ENCODE measurements at regions of chr22 and their contacts with region 1.

Region 1: GRCh38 chr22:37428649-37429586 is 1.6 kb upstream of the ELFN2 start:
- DNase-seq: peak; percentile 53 to 64
- ATAC-seq: peak; percentile 28 to 74; a peak in 3 of 6 replicates
- H3K4me3 ChIP-seq: no peak overlapping the region
- H3K27ac ChIP-seq: peak overlapping the region; percentile 64 to 97
- H3K4me1 ChIP-seq: peaks cover 64% of the 10 kb centered on the region
- CTCF ChIP-seq: peak; percentile 74
- EP300 ChIP-seq: no peak
- POLR2A ChIP-seq: no peak
- RAD21 ChIP-seq: peak; percentile 60 to 64

Region 2: DNA sequence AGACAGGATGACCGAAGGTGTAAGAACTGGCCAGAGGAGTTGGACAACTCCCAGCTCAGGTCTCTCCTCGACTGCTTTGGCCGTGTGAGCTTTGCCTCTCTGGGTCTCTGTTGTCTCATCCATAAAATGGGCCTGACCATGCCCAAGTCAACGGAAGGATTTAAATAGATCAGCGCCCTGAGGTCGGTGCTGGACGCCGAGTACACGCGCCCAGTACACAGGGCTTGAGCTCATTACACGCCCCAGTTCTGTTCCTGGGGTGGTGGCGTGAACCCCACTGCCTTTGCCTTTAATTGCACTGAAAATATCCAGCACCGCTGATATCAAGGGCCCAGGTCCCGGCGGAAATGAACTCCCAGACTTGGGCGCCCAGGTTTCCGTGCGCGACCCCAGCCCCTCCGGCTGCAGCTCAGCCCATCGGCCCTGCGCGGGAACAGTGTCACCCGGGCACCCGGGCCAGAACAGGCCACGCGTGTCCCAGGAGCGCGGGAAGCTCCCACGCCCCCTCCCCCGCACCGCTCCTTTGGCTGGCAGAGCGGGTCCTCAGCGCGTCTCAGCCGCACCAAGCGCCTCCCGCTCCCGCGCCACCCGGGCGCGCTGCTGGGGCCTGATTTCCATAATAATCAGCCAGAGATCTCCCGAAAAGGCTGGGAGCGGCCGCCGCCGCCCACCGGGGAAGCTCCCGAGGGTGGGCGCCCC is 104.4 kb before region 1 on chr22:
- CTCF ChIA-PET with region 1: interaction called, 130 read pairs
- POLR2A ChIA-PET with region 1: no interaction called
- DNase-seq: no peak
- ATAC-seq: no peak
- H3K4me3 ChIP-seq: no peak overlapping the region
- H3K27ac ChIP-seq: peak overlapping the region; percentile 61 to 94
- H3K4me1 ChIP-seq: peaks cover 71% of the 10 kb centered on the region
- CTCF ChIP-seq: no peak
- EP300 ChIP-seq: no peak
- POLR2A ChIP-seq: no peak
- RAD21 ChIP-seq: no peak

Region 3: GRCh38 chr22:37340331-37341262 is 88.3 kb before region 1 on chr22:
- CTCF ChIA-PET with region 1: interaction called, 40 read pairs
- POLR2A ChIA-PET with region 1: no interaction called
- DNase-seq: no peak
- ATAC-seq: no peak
- H3K4me3 ChIP-seq: no peak overlapping the region
- H3K27ac ChIP-seq: peak overlapping the region in 1 of 2 experiments; percentile 24; a peak in 1 of 6 replicates
- H3K4me1 ChIP-seq: peaks cover 24% of the 10 kb centered on the region
- CTCF ChIP-seq: no peak
- EP300 ChIP-seq: no peak
- POLR2A ChIP-seq: no peak
- RAD21 ChIP-seq: no peak

Region 4: GRCh38 chr22:37442537-37442936 is 13.6 kb after region 1 on chr22:
- CTCF ChIA-PET with region 1: interaction called, 23 read pairs
- POLR2A ChIA-PET with region 1: no interaction called
- DNase-seq: peak in 1 of 2 experiments; percentile 49
- ATAC-seq: peak; percentile 54 to 77; a peak in 3 of 6 replicates
- H3K4me3 ChIP-seq: no peak overlapping the region
- H3K27ac ChIP-seq: peak overlapping the region; percentile 47 to 68
- H3K4me1 ChIP-seq: peaks cover 11% of the 10 kb centered on the region; the same call in 1 of the 3 replicates
- CTCF ChIP-seq: no peak
- EP300 ChIP-seq: no peak
- POLR2A ChIP-seq: no peak
- RAD21 ChIP-seq: no peak